Naive thymus-derived CD4-positive, alpha-beta T cell (primary cell): ENCODE measurements at regions of chr1 and their contacts with region 1.

Region 1: GRCh38 chr1:90973897-90974798 is 47.7 kb downstream of the ZNF644 start:
- DNase-seq: no peak
- ATAC-seq: no peak
- H3K4me3 ChIP-seq: no peak overlapping the region
- H3K4me3 Mint-ChIP-seq: no peak overlapping the region
- H3K27ac ChIP-seq: no peak overlapping the region
- H3K27ac Mint-ChIP-seq: peak overlapping the region in 5 of 9 donors; percentile 3 to 35 (median 9)
- H3K4me1 ChIP-seq: no peaks in the 10 kb centered on the region
- H3K4me1 Mint-ChIP-seq: peaks cover 17 to 64% (median 53%) of the 10 kb centered on the region in 7 donors
- H3K27me3 ChIP-seq: no peaks in the 10 kb centered on the region
- H3K27me3 Mint-ChIP-seq: no peaks in the 10 kb centered on the region

Region 2: GRCh38 chr1:90781534-90781933 is 192.6 kb before region 1 on chr1:
- CTCF ChIA-PET with region 1: no interaction called
- POLR2A ChIA-PET with region 1: no interaction called
- intact Hi-C with region 1: no loop called
- DNase-seq: no peak
- ATAC-seq: no peak
- H3K4me3 ChIP-seq: no peak overlapping the region
- H3K4me3 Mint-ChIP-seq: no peak overlapping the region
- H3K27ac ChIP-seq: no peak overlapping the region
- H3K27ac Mint-ChIP-seq: no peak overlapping the region
- H3K4me1 ChIP-seq: no peaks in the 10 kb centered on the region
- H3K4me1 Mint-ChIP-seq: no peaks in the 10 kb centered on the region
- H3K27me3 ChIP-seq: no peaks in the 10 kb centered on the region
- H3K27me3 Mint-ChIP-seq: peaks cover 3 to 31% (median 26%) of the 10 kb centered on the region in 5 donors

Region 3: GRCh38 chr1:90993245-90993644 is 19.1 kb after region 1 on chr1:
- CTCF ChIA-PET with region 1: no interaction called
- POLR2A ChIA-PET with region 1: no interaction called
- intact Hi-C with region 1: loop called in 1 of 2 experiments (anchors 1 kb)
- DNase-seq: no peak
- ATAC-seq: no peak
- H3K4me3 ChIP-seq: no peak overlapping the region
- H3K4me3 Mint-ChIP-seq: peak overlapping the region in 6 of 10 donors; percentile 3 to 51 (median 23)
- H3K27ac ChIP-seq: no peak overlapping the region
- H3K27ac Mint-ChIP-seq: peak overlapping the region in 2 of 9 donors; percentile 3 to 52
- H3K4me1 ChIP-seq: peaks cover 0 to 12% of the 10 kb centered on the region in 2 donors
- H3K4me1 Mint-ChIP-seq: peaks cover 20 to 89% (median 82%) of the 10 kb centered on the region in 7 donors
- H3K27me3 ChIP-seq: no peaks in the 10 kb centered on the region
- H3K27me3 Mint-ChIP-seq: no peaks in the 10 kb centered on the region